HEK293T (cell line): ENCODE measurements at regions of chrX and their contacts with region 1.

Region 1: GRCh38 chrX:136880452-136881013 is at the start of gene RBMX:
- DNase-seq: peak; percentile 93

Region 2: DNA sequence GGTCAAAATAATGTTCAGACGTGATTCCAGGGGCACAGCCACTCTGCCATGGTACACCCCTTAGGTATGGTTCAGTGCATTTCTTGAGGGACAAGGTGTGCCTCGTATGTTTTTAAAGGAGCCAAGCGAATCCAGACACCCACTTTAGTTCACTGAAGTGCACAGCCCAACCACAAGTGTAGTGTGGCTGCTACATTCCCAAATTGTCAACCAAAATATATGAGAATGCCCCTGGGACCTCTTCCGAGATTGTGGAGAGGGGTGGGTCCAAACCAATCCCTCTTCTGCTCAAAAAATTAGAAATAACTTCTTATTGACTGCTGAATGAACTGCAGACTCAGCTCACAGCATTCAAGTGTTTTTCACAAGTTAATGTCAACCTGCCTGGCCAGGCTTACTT is 400.1 kb before region 1 on chrX:
- CTCF ChIA-PET with region 1: no interaction called
- POLR2A ChIA-PET with region 1: no interaction called
- DNase-seq: peak; percentile 28

Region 3: GRCh38 chrX:136714626-136715599 is 165.6 kb before region 1 on chrX:
- CTCF ChIA-PET with region 1: no interaction called
- POLR2A ChIA-PET with region 1: no interaction called
- DNase-seq: no peak

Region 4: DNA sequence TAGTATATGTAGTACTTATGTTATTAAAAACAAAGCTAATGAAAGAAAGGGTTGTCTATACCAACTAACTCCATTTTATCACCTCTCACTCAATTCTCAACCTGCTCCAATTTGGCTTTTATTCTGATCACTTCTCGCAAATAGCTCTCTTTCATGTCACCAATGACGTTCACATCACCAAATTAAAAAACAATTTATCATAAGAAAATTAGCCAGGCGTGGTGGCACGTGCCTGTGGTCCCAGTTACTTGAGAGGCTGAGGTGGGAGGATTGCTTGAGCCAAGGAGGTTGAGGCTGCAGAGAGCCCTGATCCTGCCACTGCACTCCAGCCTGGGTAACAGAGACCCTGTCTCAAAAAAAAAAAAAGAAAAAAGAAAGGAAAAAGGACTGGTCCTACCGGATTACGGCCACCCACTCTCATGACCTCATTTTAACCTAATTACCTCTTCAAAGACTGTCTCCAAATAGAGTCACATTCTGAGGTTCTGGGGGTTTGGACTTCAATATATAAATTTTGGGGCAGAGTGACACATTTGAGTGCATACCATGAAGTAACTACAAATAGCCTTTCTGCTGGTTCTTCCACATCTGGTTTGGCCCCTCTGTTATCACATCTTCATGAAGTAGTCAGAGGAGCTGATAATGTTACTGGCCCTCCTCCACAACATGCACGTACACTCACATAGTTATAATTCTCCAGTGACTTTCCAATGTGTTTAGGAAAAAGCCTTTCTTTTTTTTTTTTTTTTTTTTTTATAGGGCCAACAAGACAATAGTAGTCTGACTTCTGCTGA is 15.8 kb after region 1 on chrX:
- CTCF ChIA-PET with region 1: no interaction called
- POLR2A ChIA-PET with region 1: interaction called, 16 read pairs
- DNase-seq: no peak

Region 5: GRCh38 chrX:136909706-136910564 is 29.4 kb after region 1 on chrX:
- CTCF ChIA-PET with region 1: interaction called, 3 read pairs
- POLR2A ChIA-PET with region 1: interaction called, 21 read pairs
- DNase-seq: peak; percentile 82